A673 (cell line): ENCODE measurements at regions of chr2 and their contacts with region 1.

Region 1: GRCh38 chr2:28894470-28895177 is at the start of gene WDR43:
- DNase-seq: peak; percentile 99
- H3K4me3 ChIP-seq: peak within 1 kb of the TSS; percentile 100
- H3K27ac ChIP-seq: peak within 1 kb of the TSS; percentile 93
- H3K4me1 ChIP-seq: peaks cover 27% of the 10 kb centered on the region
- H3K27me3 ChIP-seq: peaks cover 10% of the 10 kb centered on the region
- CTCF ChIP-seq: no peak
- total RNA-seq, gene WDR43: 121 and 145 TPM in 2 replicates

Region 2: DNA sequence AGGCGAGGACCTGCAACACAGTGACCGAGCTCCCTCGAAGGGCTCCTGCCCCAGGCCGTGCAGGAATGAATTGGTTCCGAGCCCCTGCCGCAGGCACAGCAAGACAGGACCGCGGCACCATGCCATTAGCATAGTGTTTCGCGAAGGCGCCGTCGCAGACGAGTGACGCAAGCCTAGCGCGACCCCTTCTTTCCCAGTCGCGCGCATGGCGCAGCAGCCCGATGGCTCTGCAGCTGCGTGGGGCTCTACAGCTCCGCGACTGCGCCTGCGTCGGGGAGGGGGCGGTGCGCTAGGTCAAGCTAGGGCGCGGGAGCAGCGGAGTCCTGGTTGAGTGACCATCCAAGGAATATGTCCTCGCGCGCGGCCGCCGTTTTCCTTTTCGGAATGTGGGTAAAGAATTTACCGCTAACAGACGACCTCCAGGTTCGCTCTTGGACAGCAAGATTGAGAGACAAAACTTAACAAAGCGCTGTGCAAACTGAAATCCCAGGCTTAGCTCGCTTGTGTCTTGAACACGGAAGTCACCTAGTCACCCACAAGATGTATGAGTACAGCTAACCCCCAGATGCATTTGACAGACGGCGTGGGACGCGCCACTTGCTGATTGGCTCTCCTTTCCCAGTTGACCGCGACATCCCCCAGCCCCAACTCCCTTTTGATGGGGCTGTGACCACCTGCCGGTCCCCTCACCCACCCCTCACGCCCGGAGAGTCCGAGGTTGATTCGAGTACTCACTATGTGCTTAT is 24.3 kb before region 1 on chr2 and contains the start of gene TRMT61B:
- CTCF ChIA-PET with region 1: no interaction called
- POLR2A ChIA-PET with region 1: no interaction called
- intact Hi-C with region 1: loop called (anchors 2 kb)
- DNase-seq: peak; percentile 96
- H3K4me3 ChIP-seq: peak within 1 kb of the TSS; percentile 91
- H3K27ac ChIP-seq: peak within 1 kb of the TSS; percentile 84
- H3K4me1 ChIP-seq: peaks cover 13% of the 10 kb centered on the region
- H3K27me3 ChIP-seq: peaks cover under 1% of the 10 kb centered on the region
- CTCF ChIP-seq: no peak
- total RNA-seq, gene TRMT61B: 18.3 and 21.3 TPM in 2 replicates